ENCODE measurements at regions of chr3 and their contacts with region 1.

Region 1: DNA sequence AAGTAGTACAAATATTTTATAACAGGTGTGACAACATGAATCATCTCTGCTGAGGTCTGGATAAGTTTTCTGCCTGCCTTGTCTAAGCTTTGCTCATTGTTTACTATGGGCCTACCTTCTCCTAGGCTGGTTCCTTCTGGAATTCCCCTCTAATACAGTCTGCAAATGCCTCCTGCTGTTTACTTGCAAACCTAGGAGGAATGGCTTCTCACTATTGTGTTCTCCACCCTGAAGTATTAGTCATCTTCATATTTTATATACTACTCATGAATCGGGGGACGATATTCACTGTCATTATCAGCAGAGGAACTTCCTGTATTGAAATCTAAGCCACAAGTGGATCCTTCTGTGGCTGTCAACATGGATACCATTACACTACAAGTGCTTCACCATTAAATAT is 154.8 kb downstream of the PLCL2 start:
- DNase-seq: peak; percentile 98
- ATAC-seq: peak; percentile 96
- H3K4me3 ChIP-seq: no peak overlapping the region
- H3K27ac ChIP-seq: peak overlapping the region; percentile 96
- H3K4me1 ChIP-seq: peaks cover 43% of the 10 kb centered on the region
- H3K27me3 ChIP-seq: no peaks in the 10 kb centered on the region
- CTCF ChIP-seq: 0 out of 2 replicates have a peak, but pooled peaks have one; percentile 16

Region 2: DNA sequence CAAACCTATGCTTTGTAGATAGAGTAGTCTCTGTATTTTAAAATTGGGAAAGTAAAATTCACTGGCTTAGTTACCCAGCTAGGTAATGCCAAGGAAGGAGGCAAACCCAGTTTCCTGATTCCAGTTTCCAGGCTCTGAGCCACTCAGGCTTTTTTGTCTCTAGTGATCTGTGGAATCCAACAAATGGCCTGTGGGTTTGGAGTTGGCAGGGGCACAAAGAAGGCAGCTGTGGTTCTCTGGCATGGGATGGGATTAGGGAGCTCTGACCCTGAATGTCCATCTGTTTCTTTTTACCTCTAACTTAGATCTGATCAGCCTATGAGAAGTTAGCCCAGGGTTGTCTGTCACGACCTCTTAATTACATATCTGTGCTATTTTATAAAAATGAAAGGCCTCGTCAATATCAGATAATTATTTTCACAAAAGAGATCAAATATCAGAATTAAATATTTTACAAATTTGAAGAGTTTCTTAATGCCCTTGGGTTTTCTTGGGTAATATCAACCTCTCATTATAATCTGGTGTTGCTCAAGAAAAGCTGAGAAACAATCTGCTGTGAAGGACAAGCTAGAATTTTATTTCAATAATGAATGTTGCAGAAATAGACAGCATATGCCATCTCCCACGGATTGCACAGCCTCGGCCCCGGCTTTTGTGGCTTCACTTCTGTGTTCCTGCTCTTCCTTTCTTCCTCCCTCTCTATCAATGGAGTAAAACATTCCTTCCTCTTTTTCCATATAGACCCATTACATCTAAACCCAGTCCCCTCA is 370.6 kb before region 1 on chr3:
- CTCF ChIA-PET with region 1: no interaction called
- POLR2A ChIA-PET with region 1: no interaction called
- intact Hi-C with region 1: no loop called
- DNase-seq: no peak
- ATAC-seq: no peak
- H3K4me3 ChIP-seq: no peak overlapping the region
- H3K27ac ChIP-seq: no peak overlapping the region
- H3K4me1 ChIP-seq: peaks cover 11% of the 10 kb centered on the region
- H3K27me3 ChIP-seq: no peaks in the 10 kb centered on the region
- CTCF ChIP-seq: no peak

Region 3: GRCh38 chr3:16728781-16729745 is 310.5 kb before region 1 on chr3:
- CTCF ChIA-PET with region 1: no interaction called
- POLR2A ChIA-PET with region 1: no interaction called
- intact Hi-C with region 1: loop called (anchors 5 kb)
- DNase-seq: peak; percentile 90
- ATAC-seq: peak; percentile 86
- H3K4me3 ChIP-seq: peak overlapping the region; percentile 44
- H3K27ac ChIP-seq: peak overlapping the region; percentile 87
- H3K4me1 ChIP-seq: peaks cover 25% of the 10 kb centered on the region
- H3K27me3 ChIP-seq: no peaks in the 10 kb centered on the region
- CTCF ChIP-seq: no peak

Region 4: DNA sequence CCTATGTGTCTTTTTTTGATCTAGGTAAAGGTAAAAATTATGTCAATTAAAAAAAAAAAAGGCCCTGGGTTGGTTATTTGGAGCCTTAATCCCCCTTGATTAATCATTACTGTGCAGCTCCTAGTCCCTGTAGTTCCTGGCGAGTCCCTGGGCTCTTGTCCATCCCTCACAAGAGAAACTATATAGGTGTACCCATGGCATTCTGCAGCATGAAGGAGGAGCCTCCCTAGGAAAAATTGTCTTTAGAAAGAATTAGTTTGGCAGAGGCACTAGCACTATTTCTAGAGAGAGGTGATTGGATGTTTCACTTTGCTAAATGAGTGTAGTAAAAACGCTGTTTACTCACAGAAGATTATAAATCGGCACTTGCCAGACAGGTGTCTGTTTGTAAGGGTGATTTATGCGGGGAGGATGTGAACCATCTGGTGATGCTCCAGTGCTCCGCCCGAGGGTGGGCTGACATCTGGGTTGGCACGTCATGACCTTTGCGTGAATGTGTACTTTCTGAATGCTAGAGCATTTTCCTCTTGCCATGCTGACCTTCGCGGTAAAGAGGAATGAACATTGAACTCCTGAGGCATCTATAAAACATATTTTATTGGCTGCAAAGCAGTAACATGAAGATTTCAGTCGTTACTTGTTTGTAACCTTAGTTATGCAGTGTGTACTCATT is 142.2 kb before region 1 on chr3:
- CTCF ChIA-PET with region 1: no interaction called
- POLR2A ChIA-PET with region 1: no interaction called
- intact Hi-C with region 1: loop called (anchors 1 kb)
- DNase-seq: peak; percentile 94
- ATAC-seq: peak; percentile 86
- H3K4me3 ChIP-seq: peak overlapping the region; percentile 52
- H3K27ac ChIP-seq: peak overlapping the region; percentile 85
- H3K4me1 ChIP-seq: peaks cover 25% of the 10 kb centered on the region
- H3K27me3 ChIP-seq: no peaks in the 10 kb centered on the region
- CTCF ChIP-seq: no peak

Region 5: DNA sequence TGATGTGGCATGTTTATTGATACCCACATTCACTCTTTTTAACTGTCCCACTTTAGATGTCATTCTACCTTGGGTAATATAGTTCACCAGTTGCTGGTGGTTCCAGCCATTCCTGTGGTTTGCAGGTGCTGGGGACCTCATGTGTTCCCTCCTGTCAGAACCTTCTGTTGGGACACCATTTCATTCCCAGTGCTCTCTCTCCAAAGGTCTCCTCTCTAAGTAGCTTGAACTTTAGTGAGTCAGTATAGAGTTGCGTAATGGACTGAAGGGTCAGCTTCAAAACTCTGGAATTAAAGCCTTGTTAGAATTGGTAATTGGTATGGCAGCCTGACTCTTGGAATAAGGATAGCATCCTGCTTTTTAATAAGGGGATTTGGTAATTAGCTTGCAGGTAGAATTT is 46.4 kb before region 1 on chr3:
- CTCF ChIA-PET with region 1: no interaction called
- POLR2A ChIA-PET with region 1: no interaction called
- intact Hi-C with region 1: loop called (anchors 1 kb)
- DNase-seq: peak; percentile 55
- ATAC-seq: no peak
- H3K4me3 ChIP-seq: no peak overlapping the region
- H3K27ac ChIP-seq: no peak overlapping the region
- H3K4me1 ChIP-seq: peaks cover 36% of the 10 kb centered on the region
- H3K27me3 ChIP-seq: no peaks in the 10 kb centered on the region
- CTCF ChIP-seq: no peak

Region 6: GRCh38 chr3:17070606-17071005 is 31.0 kb after region 1 on chr3:
- CTCF ChIA-PET with region 1: no interaction called
- POLR2A ChIA-PET with region 1: no interaction called
- intact Hi-C with region 1: loop called (anchors 2 kb)
- DNase-seq: peak; percentile 87
- ATAC-seq: peak; percentile 92
- H3K4me3 ChIP-seq: peak overlapping the region; percentile 17; the same call in 1 of the 2 replicates
- H3K27ac ChIP-seq: peak overlapping the region; percentile 88
- H3K4me1 ChIP-seq: peaks cover 27% of the 10 kb centered on the region
- H3K27me3 ChIP-seq: no peaks in the 10 kb centered on the region
- CTCF ChIP-seq: no peak

Region 7: DNA sequence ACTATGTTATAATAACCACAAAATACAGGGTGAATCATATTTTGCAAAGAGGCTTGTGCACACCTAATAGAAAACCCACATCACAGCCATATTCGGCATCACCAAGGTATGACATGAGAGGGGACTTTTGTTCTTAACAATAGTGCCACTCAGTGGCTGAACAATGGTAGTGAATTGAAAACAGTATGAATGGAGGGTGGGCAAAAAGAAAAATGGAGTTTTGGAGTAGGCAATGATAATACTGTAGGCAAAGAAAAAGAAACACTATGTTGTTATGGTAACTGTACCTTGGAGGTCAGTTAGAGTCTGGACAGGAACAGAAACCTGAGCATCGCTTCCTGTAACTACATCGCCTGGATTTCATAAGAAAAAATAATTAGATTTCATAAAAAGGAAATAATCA is 193.8 kb after region 1 on chr3:
- CTCF ChIA-PET with region 1: no interaction called
- POLR2A ChIA-PET with region 1: no interaction called
- intact Hi-C with region 1: loop called (anchors 1 kb)
- DNase-seq: peak; percentile 97
- ATAC-seq: peak; percentile 99
- H3K4me3 ChIP-seq: no peak overlapping the region
- H3K27ac ChIP-seq: no peak overlapping the region
- H3K4me1 ChIP-seq: peaks cover 18% of the 10 kb centered on the region
- H3K27me3 ChIP-seq: no peaks in the 10 kb centered on the region
- CTCF ChIP-seq: peak; percentile 93

Region 8: DNA sequence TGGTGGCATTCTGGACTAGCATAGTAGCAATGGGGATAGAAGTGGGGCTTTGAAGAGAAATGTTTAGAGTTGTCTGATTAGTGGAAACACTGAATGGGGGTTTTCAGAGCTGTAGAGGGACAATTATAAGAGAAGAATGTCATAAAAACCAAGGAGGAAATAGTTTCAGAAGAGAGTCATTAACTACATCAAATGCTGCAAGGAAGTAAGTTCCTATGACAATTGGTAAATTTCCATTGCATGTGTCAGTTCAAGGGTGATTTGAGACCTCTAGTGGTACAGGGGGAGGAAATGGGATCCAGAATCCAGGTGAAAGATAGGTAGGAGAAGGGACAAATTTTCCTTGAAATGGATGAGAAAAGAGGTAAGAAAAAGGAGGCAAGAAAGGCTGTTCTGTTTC is 771.2 kb after region 1 on chr3:
- CTCF ChIA-PET with region 1: no interaction called
- POLR2A ChIA-PET with region 1: no interaction called
- intact Hi-C with region 1: no loop called
- DNase-seq: peak; percentile 83
- ATAC-seq: peak; percentile 62
- H3K4me3 ChIP-seq: no peak overlapping the region
- H3K27ac ChIP-seq: peak overlapping the region; percentile 50
- H3K4me1 ChIP-seq: peaks cover 40% of the 10 kb centered on the region
- H3K27me3 ChIP-seq: no peaks in the 10 kb centered on the region
- CTCF ChIP-seq: peak; percentile 68